Activated naive CD4-positive, alpha-beta T cell treated with anti-CD3 and anti-CD28 coated beads, Interleukin-2, amount 10 ng/mL, durations not matched to agents 7 days and 5 days (primary cell): ENCODE measurements at regions of chr2 and their contacts with region 1.

Region 1: GRCh38 chr2:64644177-64645004 is 9.3 kb downstream of the SERTAD2 start:
- DNase-seq: peak; percentile 74
- H3K4me3 Mint-ChIP-seq: peak overlapping the region; percentile 77
- H3K27ac Mint-ChIP-seq: peak overlapping the region; percentile 92
- H3K4me1 Mint-ChIP-seq: peaks cover 74% of the 10 kb centered on the region
- H3K27me3 Mint-ChIP-seq: no peaks in the 10 kb centered on the region

Region 2: GRCh38 chr2:64586883-64587481 is 57.4 kb before region 1 on chr2:
- CTCF ChIA-PET with region 1: interaction called, 10 read pairs
- DNase-seq: no peak
- H3K4me3 Mint-ChIP-seq: no peak overlapping the region
- H3K27ac Mint-ChIP-seq: no peak overlapping the region
- H3K4me1 Mint-ChIP-seq: peaks cover 3% of the 10 kb centered on the region
- H3K27me3 Mint-ChIP-seq: no peaks in the 10 kb centered on the region

Region 3: DNA sequence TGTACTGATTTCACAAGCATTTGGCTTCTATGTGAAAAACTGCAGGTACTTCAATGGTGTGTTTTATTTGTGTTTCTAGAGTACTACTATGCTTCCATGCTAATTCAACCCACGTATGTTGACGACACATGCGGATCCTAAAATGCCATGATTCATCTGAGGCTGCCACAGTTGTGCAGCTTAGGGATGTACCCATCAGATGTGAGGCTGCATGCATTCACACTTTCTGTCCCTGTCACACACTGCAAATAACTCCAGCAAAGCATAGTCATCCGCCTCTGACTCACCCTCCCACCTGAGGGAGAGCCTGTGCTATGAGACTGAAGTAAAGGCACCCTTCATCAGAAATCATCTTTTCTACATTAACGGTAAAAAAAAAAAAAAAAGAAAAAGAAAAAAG is 31.5 kb after region 1 on chr2:
- CTCF ChIA-PET with region 1: interaction called, 11 read pairs
- DNase-seq: peak; percentile 34
- H3K4me3 Mint-ChIP-seq: no peak overlapping the region
- H3K27ac Mint-ChIP-seq: no peak overlapping the region
- H3K4me1 Mint-ChIP-seq: peaks cover 20% of the 10 kb centered on the region
- H3K27me3 Mint-ChIP-seq: no peaks in the 10 kb centered on the region

Region 4: GRCh38 chr2:64686283-64686956 is 42.0 kb after region 1 on chr2:
- CTCF ChIA-PET with region 1: no interaction called
- DNase-seq: no peak
- H3K4me3 Mint-ChIP-seq: no peak overlapping the region
- H3K27ac Mint-ChIP-seq: no peak overlapping the region
- H3K4me1 Mint-ChIP-seq: no peaks in the 10 kb centered on the region
- H3K27me3 Mint-ChIP-seq: no peaks in the 10 kb centered on the region

Region 5: DNA sequence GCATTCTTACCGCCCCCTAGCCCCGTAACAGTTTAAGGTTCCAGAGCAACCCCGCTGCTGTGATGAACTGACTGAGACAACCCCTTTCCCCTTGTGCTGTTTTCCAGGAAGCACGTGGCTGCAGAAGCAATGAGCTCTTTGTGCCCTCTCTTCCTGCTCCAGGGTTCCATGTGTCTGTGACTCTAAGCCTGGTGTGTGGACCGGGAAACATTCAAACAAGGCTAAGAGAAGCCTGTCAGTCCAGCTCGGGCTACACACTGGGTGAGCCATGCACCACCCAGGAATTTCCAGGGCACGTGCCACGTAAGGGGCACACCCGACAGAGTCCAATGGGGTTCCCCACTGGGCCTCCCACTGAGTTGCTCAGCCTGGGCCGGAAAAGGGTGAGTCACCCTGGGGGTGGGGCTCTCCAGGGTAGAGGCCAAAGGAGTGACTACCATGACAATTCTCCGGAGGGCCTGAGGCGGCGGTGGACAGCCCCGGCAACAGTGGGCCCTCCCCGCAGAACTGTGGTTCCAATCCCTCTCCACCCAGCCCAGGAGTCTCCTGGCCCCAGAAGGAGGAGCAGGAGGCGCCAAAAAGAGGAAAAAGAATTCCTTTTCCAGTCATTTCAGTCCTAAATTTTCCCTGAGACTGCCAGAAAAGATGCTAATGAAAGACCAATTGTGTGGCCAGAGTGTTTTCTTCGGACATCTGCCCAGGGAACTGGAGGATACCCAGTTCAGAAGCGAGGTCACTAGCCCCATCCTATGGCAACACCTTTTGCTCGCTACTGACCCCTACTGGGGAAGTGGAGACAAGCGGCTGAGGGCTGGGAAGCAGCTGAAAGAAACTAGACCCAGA is 187.0 kb after region 1 on chr2:
- CTCF ChIA-PET with region 1: interaction called, 53 read pairs
- DNase-seq: peak; percentile 87
- H3K4me3 Mint-ChIP-seq: no peak overlapping the region
- H3K27ac Mint-ChIP-seq: no peak overlapping the region
- H3K4me1 Mint-ChIP-seq: peaks cover 21% of the 10 kb centered on the region
- H3K27me3 Mint-ChIP-seq: peaks cover 17% of the 10 kb centered on the region